Activated CD4-positive, alpha-beta T cell treated with anti-CD3 and anti-CD28 coated beads, Interleukin-2, amount 10 ng/mL, durations not matched to agents 24 days and 14 days (primary cell): ENCODE measurements at regions of chr2 and their contacts with region 1.

Region 1: GRCh38 chr2:162123806-162124758 is 28.0 kb downstream of the GCG start:
- DNase-seq: peak; percentile 73
- H3K4me3 Mint-ChIP-seq: no peak overlapping the region
- H3K27ac Mint-ChIP-seq: no peak overlapping the region
- H3K4me1 Mint-ChIP-seq: peaks cover 16% of the 10 kb centered on the region
- H3K27me3 Mint-ChIP-seq: peaks cover 7% of the 10 kb centered on the region

Region 2: GRCh38 chr2:161426922-161427663 is 697.0 kb before region 1 on chr2:
- intact Hi-C with region 1: loop called (anchors 10 kb)
- DNase-seq: peak; percentile 75
- H3K4me3 Mint-ChIP-seq: peak overlapping the region; percentile 72
- H3K27ac Mint-ChIP-seq: peak overlapping the region; percentile 60
- H3K4me1 Mint-ChIP-seq: peaks cover 23% of the 10 kb centered on the region
- H3K27me3 Mint-ChIP-seq: peaks cover 84% of the 10 kb centered on the region

Region 3: DNA sequence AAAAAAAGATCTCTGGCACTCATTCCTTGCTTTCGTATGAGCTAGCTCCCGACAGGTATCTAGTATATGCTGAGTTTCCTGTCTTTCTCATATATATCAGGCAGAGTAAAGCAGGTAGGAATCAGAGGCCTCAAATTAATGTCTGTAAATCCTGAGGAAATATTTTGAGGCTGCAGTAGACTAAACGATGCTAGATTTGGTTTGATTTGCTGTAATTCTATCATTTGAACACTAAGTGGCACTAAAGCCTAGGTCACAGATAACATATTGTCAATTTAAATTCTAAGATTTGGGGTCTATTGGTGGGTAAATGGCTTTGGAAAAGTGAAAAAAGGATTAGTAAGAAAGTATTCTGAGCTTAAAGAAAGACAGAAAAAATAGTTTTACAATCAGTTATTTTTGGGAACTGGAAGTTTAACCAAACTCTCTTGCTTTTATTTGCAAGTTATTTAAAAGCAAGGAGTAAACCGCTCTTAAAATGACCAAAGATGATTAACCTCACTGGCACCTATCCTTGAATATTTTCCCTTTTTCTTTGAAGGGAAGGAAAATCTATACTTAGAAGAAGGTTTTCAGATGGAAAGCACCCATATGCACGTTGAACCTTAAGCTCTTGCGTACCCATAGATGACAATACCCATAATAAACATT is 537.4 kb before region 1 on chr2:
- intact Hi-C with region 1: loop called (anchors 1 kb)
- DNase-seq: no peak
- H3K4me3 Mint-ChIP-seq: no peak overlapping the region
- H3K27ac Mint-ChIP-seq: no peak overlapping the region
- H3K4me1 Mint-ChIP-seq: no peaks in the 10 kb centered on the region
- H3K27me3 Mint-ChIP-seq: peaks cover 23% of the 10 kb centered on the region

Region 4: GRCh38 chr2:162007447-162008040 is 116.5 kb before region 1 on chr2:
- intact Hi-C with region 1: loop called (anchors 5 kb)
- DNase-seq: no peak
- H3K4me3 Mint-ChIP-seq: no peak overlapping the region
- H3K27ac Mint-ChIP-seq: no peak overlapping the region
- H3K4me1 Mint-ChIP-seq: peaks cover 58% of the 10 kb centered on the region
- H3K27me3 Mint-ChIP-seq: no peaks in the 10 kb centered on the region

Region 5: GRCh38 chr2:162221064-162221463 is 97.0 kb after region 1 on chr2:
- intact Hi-C with region 1: no loop called
- DNase-seq: peak; percentile 88
- H3K4me3 Mint-ChIP-seq: no peak overlapping the region
- H3K27ac Mint-ChIP-seq: no peak overlapping the region
- H3K4me1 Mint-ChIP-seq: no peaks in the 10 kb centered on the region
- H3K27me3 Mint-ChIP-seq: peaks cover 57% of the 10 kb centered on the region